ENCODE measurements at regions of chr3 and their contacts with region 1.

Region 1: GRCh38 chr3:94494992-94495391 is 432.1 kb downstream of the NSUN3 start:
- DNase-seq: no peak
- H3K4me3 ChIP-seq: no peak overlapping the region
- H3K27ac ChIP-seq: no peak overlapping the region
- H3K4me1 ChIP-seq: no peaks in the 10 kb centered on the region
- H3K27me3 ChIP-seq: no peaks in the 10 kb centered on the region
- CTCF ChIP-seq: no peak

Region 2: DNA sequence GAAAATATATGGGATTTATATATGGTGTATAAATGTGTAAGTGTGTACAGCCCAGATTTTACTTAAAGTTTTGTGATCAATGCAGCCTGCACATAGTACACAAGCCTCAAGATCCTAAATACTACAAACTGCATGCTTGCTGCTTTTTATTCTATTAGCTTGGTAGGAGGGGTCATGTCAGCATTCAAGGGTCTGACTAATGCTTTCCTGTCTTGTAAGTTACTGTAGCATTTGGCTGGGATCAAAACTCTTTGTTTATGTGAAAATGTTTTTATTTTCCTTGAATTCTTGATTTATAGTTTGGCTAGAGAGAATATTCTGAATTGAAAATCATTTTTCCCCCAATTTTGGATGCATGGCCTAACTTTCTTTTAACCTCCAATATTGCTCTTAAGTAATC is 61.2 kb before region 1 on chr3:
- CTCF ChIA-PET with region 1: no interaction called
- POLR2A ChIA-PET with region 1: no interaction called
- intact Hi-C with region 1: loop called (anchors 10 kb)
- DNase-seq: no peak
- H3K4me3 ChIP-seq: no peak overlapping the region
- H3K27ac ChIP-seq: no peak overlapping the region
- H3K4me1 ChIP-seq: no peaks in the 10 kb centered on the region
- H3K27me3 ChIP-seq: no peaks in the 10 kb centered on the region
- CTCF ChIP-seq: no peak